ENCODE measurements at regions of chr1 and their contacts with region 1.

Region 1: DNA sequence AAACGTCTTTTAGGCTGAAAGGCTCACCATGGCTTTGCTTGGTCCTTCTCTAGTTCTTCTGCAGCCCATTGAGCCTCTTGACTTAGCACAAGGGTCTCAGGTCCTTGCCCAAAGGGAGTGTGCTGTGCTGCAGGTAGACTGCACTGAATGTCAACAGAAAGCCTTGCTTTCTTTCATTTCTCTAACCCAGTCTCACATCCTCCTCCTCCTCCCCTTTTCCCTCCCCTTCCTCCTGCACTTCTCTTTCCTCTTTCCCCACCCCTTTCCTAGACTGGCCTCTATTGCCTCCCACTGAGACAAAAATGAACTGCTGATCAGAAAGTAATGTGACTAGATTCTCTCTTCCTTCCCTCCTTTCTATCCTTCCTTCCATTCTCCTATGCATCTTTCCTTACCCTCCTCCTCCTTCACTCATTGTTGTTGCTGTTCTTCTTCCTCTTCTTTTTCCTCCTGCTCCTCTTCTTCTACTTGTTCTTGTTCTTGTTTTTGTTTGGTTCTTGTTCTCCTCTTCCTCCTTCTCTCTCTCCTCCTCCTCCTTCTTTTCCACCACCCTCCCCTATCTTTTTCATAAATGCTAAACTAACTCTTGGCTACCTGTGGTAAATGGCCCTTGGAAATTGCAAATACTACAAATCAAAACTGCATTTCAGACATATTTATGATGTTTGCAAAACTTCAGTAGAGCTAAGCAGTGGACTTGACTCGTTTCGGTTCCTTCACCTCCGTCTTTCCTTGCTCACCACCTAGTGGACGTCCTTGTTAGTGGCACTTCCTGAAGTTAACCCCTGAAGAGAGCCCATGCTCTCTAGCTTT is at the start of gene SELL:
- DNase-seq: peak; percentile 57
- CTCF ChIP-seq: peak; percentile 90

Region 2: DNA sequence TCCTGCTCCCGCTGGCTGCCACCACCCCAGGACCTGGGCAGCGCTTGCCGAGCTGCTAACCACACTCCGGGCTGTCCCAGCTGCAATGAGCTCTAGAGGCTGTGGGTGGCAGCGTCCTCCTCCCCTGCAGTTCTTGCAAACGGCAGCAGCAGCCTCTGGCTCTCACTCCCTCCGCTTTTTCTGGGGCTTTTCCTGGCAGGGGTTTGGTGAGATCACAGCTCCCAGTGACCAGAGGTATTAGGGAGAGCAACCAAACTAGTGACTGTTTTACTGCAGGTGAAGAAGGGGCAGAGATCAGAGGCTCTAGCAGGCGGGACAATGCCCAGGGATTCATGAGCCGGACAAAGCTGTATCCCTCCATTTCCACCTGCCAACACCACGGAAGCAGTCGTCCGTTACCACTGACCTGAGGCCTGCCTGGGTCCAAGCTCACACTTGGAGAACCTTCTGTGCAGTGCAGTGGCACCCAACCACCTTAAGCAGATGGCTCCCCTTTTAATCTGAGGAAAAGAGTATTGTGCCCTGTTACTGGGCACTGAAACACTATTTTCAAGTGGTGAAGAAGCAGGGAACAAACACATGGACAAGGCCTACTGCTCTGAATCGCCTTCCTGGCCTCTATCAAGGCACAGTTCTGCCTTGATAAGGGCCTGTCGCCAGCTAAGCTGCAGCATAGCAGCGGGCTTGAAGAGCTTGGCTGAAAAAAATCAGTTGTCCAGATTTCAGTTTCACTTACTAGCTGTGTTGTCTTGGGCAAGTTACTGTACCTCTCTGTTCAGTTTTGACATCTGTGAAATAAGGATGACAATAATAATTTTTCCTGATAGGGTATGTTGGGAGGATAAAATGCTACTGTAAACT is 125.0 kb before region 1 on chr1 and contains the start of gene F5:
- CTCF ChIA-PET with region 1: interaction called, 13 read pairs
- POLR2A ChIA-PET with region 1: no interaction called
- DNase-seq: peak; percentile 69
- CTCF ChIP-seq: peak; percentile 57

Region 3: DNA sequence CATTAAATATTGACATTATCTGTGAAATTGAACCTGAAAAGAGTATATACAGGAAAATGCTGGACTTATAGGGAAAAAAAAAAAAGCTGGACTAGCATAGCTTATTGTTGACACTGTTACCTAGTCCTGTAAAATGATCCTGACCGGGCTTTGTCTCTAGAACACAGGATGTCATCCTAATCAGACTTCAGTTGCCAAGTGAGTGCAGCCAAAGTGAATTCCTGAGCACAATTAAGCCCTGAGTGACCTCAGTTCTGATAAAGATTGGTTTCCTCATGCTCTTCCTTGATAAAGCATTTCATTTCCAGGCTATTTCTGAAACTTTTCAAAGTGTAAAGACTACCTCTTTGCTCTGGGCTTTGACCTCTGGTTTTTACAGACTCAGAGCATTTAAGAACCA is 101.6 kb before region 1 on chr1:
- CTCF ChIA-PET with region 1: interaction called, 12 read pairs
- POLR2A ChIA-PET with region 1: no interaction called
- DNase-seq: no peak
- CTCF ChIP-seq: no peak

Region 4: DNA sequence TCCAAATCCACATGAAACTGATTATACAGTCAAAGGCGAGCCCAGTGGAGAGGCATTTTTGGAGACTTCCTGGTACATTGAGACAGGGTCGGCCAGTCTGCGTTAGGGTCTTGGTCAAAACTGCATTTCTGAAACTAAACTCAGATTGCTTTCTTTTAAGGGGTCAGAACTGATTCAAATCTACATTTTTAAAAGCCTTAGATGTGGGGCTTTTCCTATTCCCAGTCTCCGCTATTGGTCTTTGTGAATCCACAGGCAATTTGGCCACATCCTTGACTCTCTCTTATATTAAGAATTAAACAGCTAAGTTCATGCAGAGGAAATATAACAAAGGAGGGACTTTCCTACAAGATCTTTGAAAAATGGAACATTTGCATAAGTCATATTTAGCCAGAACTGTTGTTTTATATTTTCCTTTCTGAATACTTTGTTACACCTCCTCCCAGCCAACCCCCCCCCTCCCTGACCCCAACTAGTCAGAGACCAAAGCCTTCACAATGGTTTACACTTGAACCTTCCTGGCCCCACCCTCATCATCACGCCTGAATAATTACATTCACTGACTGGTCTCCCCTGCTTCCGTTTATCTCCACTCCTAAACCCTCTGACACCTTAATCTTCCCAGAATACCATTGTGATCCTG is 31.2 kb before region 1 on chr1:
- CTCF ChIA-PET with region 1: interaction called, 12 read pairs
- POLR2A ChIA-PET with region 1: no interaction called
- DNase-seq: peak; percentile 38
- CTCF ChIP-seq: no peak

Region 5: DNA sequence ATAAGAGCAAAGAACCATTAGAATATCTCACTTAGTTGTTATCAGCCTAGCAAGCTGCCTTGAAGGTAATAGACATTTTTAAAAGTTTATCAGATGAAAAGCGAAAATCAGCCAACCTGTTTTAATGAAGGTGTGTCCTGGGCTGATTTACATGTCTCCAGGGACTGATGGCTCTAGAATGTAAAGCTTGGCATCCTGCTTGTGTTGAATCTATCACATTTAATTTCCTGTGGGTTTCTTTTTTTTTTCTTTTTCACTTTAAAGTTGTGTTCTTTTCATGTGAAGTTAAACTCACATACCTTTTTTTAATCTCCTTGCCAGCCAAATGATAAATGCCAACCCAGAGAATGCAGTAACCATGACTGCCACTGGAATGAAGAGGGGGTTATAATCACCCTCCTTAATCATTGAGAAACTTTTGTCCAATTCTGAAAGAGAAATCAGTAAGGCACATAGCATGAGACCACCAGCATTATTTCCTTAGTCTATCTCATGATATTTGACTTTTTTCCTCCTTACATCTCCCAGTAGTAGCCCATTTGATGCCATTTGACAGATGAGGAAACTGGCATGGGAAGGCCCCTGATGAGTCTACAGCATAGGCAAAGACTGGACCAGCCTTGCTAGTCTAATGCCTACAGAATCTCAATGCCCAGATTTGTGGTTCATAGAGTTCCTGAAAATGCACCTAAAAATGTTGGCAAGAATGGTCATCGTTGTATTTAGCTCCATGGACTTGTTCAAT is 10.2 kb before region 1 on chr1:
- CTCF ChIA-PET with region 1: interaction called, 15 read pairs
- POLR2A ChIA-PET with region 1: no interaction called
- DNase-seq: no peak
- CTCF ChIP-seq: no peak

Region 6: GRCh38 chr1:169874229-169874628 is 162.6 kb after region 1 on chr1:
- CTCF ChIA-PET with region 1: no interaction called
- POLR2A ChIA-PET with region 1: no interaction called
- DNase-seq: no peak
- CTCF ChIP-seq: no peak

Region 7: DNA sequence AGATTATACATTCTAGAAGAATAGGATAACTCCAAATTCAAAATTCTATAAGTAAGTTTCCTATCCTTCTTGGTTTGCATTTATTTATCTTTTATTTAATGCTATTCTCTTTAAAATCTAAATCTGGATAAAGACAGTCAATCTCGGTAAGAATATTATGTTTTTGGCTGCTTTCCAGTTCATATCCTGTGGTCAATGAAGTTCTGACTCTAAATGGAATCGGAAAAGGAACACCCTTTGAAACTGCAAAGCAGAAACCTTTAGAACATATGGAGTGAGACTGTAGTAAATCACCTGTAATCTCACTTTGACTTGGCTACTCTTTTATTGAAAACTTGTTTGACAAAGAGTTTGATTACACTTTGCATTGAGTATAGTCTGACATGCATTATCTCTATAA is 277.6 kb after region 1 on chr1:
- CTCF ChIA-PET with region 1: no interaction called
- POLR2A ChIA-PET with region 1: no interaction called
- DNase-seq: no peak
- CTCF ChIP-seq: no peak